A549 (cell line): ENCODE measurements at regions of chr14 and their contacts with region 1.

Region 1: DNA sequence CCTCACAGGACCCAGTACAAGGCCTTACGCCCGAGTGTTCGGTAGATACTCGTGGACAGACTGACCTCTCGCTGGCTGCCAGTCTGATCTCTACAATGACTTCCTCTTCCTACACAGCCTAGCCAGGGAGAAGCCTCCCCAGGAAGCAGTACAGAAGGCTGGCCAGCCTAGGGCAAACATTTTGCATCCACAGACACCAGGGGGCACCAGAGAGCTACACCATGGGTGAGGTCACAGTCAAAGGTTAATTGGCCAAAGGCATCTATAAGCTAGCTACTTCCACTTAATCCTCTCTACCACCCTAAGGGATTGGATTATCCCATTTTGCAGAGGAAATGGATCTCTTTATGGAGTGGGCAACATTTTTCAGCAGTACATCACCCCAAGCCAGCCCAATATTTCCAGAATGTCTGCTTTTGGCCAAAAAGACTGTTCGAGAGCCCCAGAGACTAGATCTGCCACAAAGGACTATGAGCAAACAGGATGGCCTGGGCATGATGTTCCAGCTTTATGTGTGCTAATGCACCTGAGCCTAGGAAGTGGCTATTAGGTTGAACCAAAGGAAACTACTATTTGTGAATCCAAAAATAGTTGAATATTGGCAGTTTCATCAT is 14.6 kb upstream of the PNMA1 start:
- DNase-seq: peak; percentile 78 to 87
- ATAC-seq: peak; percentile 60 to 77; a peak in 5 of 6 replicates
- H3K4me3 ChIP-seq: no peak overlapping the region
- H3K27ac ChIP-seq: peak overlapping the region; percentile 42 to 76; a peak in 5 of 6 replicates
- H3K4me1 ChIP-seq: peaks cover 50% of the 10 kb centered on the region
- CTCF ChIP-seq: peak; percentile 92
- EP300 ChIP-seq: no peak
- POLR2A ChIP-seq: no peak
- RAD21 ChIP-seq: peak; percentile 95 to 97

Region 2: DNA sequence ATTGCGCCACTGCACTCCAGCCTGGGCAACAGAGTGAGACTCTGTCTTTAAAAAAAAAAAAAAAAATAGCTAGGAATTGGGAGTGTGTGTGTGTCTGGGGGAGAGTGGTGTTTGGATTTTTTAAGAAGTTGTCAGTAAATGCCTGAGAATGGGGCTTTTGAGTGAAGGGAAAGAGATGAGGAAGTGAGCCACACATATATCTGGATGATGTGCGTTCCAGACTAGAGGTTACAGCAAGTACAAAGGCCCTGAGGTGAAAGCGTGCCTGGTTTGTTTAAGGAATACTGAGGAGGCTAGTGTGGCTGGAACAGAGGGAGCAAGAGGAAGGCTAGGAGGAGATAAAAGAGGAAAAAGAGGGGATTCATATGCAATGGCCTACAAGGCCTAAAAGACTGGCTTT is 421.6 kb before region 1 on chr14:
- CTCF ChIA-PET with region 1: no interaction called
- POLR2A ChIA-PET with region 1: no interaction called
- DNase-seq: no peak
- ATAC-seq: no peak
- H3K4me3 ChIP-seq: no peak overlapping the region
- H3K27ac ChIP-seq: no peak overlapping the region
- H3K4me1 ChIP-seq: peaks cover 13% of the 10 kb centered on the region; the same call in 2 of the 3 replicates
- CTCF ChIP-seq: no peak
- EP300 ChIP-seq: no peak
- POLR2A ChIP-seq: no peak
- RAD21 ChIP-seq: no peak

Region 3: GRCh38 chr14:73627151-73627558 is 101.7 kb before region 1 on chr14:
- CTCF ChIA-PET with region 1: no interaction called
- POLR2A ChIA-PET with region 1: no interaction called
- DNase-seq: no peak
- ATAC-seq: no peak
- H3K4me3 ChIP-seq: no peak overlapping the region
- H3K27ac ChIP-seq: no peak overlapping the region
- H3K4me1 ChIP-seq: no peaks in the 10 kb centered on the region
- CTCF ChIP-seq: no peak
- EP300 ChIP-seq: no peak
- POLR2A ChIP-seq: no peak
- RAD21 ChIP-seq: no peak

Region 4: GRCh38 chr14:73741386-73741875 is 12.6 kb after region 1 on chr14:
- CTCF ChIA-PET with region 1: interaction called, 138 read pairs
- POLR2A ChIA-PET with region 1: interaction called, 3 read pairs
- DNase-seq: peak in 1 of 2 experiments; percentile 61
- ATAC-seq: peak; percentile 33 to 72
- H3K4me3 ChIP-seq: peak overlapping the region; percentile 19
- H3K27ac ChIP-seq: peak overlapping the region; percentile 81 to 86
- H3K4me1 ChIP-seq: peaks cover 69% of the 10 kb centered on the region
- CTCF ChIP-seq: no peak
- EP300 ChIP-seq: no peak
- POLR2A ChIP-seq: no peak
- RAD21 ChIP-seq: no peak

Region 5: DNA sequence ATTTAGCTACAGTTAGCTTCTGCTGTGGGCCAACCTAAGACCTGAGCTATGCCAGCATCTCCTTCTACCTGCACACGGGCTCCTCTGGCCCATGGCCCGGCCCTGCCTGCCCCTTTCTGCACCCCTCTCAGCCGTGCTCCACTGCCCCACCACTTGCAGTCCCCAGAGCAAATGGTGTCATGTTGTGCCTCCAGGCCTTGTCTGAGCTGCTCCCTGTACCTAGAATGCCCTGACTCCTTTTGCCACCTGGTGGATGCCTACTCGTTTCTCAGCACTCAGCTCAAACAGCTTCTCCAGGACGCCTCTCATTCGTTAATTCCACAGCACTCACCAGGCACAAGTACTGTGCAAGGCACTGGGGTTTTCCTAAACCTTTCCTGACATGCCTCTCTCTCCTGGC is 48.6 kb after region 1 on chr14:
- CTCF ChIA-PET with region 1: interaction called, 11 read pairs
- POLR2A ChIA-PET with region 1: no interaction called
- DNase-seq: no peak
- ATAC-seq: peak; percentile 45 to 63; a peak in 3 of 6 replicates
- H3K4me3 ChIP-seq: no peak overlapping the region
- H3K27ac ChIP-seq: no peak overlapping the region
- H3K4me1 ChIP-seq: peaks cover 1% of the 10 kb centered on the region
- CTCF ChIP-seq: no peak
- EP300 ChIP-seq: no peak
- POLR2A ChIP-seq: no peak
- RAD21 ChIP-seq: no peak

Region 6: DNA sequence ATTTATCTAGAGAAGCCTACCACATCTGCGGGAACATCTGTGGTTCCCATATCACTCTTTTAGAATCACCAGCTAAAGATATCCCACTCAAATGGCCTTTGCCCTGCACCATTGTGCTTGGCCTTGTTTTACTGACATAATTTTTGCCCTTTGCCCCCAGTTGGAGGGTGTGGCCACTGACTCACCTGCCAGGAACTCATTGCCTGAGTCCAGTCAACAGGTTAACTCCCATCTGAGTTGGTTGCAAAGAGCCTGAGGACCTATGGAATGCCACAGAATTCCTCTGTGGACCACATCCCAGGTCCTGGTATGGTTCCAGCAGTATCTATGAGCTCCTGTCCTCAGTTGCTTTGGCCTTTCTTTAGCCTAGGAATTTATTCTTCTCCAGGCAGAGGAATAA is 67.1 kb after region 1 on chr14:
- CTCF ChIA-PET with region 1: interaction called, 23 read pairs
- POLR2A ChIA-PET with region 1: no interaction called
- DNase-seq: peak; percentile 49 to 78
- ATAC-seq: peak; percentile 43 to 76; a peak in 4 of 6 replicates
- H3K4me3 ChIP-seq: no peak overlapping the region
- H3K27ac ChIP-seq: peak overlapping the region; percentile 7 to 57; a peak in 4 of 6 replicates
- H3K4me1 ChIP-seq: peaks cover 36% of the 10 kb centered on the region
- CTCF ChIP-seq: no peak
- EP300 ChIP-seq: no peak
- POLR2A ChIP-seq: no peak
- RAD21 ChIP-seq: no peak

Region 7: GRCh38 chr14:73825551-73826188 is 96.8 kb after region 1 on chr14:
- CTCF ChIA-PET with region 1: interaction called, 191 read pairs
- POLR2A ChIA-PET with region 1: no interaction called
- DNase-seq: peak; percentile 83 to 89
- ATAC-seq: peak; percentile 93 to 94
- H3K4me3 ChIP-seq: no peak overlapping the region
- H3K27ac ChIP-seq: no peak overlapping the region
- H3K4me1 ChIP-seq: peaks cover 10% of the 10 kb centered on the region
- CTCF ChIP-seq: peak; percentile 83
- EP300 ChIP-seq: no peak
- POLR2A ChIP-seq: no peak
- RAD21 ChIP-seq: peak; percentile 90 to 93

Region 8: DNA sequence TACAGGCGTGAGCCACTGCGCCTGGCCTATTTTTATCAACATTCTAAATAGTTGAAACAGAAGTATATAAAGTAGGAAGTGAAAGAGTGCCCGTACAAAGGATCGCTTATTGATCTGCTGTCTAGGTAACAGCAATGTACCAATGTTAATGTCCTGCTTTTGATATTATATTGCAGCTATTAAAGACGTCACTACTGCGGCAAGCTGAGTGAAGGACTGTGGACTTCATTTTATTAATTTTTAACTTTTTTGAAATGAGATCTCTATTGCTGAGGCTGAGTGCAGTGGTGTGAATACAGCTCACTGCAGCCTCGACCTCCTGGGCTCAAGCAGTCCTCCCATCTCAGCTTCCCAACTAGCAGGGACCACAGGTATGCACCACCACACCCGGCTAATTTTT is 133.7 kb after region 1 on chr14:
- CTCF ChIA-PET with region 1: interaction called, 11 read pairs
- POLR2A ChIA-PET with region 1: no interaction called
- DNase-seq: no peak
- ATAC-seq: no peak
- H3K4me3 ChIP-seq: no peak overlapping the region
- H3K27ac ChIP-seq: no peak overlapping the region
- H3K4me1 ChIP-seq: no peaks in the 10 kb centered on the region
- CTCF ChIP-seq: no peak
- EP300 ChIP-seq: no peak
- POLR2A ChIP-seq: no peak
- RAD21 ChIP-seq: no peak